ENCODE measurements at regions of chr3 and their contacts with region 1.

Region 1: DNA sequence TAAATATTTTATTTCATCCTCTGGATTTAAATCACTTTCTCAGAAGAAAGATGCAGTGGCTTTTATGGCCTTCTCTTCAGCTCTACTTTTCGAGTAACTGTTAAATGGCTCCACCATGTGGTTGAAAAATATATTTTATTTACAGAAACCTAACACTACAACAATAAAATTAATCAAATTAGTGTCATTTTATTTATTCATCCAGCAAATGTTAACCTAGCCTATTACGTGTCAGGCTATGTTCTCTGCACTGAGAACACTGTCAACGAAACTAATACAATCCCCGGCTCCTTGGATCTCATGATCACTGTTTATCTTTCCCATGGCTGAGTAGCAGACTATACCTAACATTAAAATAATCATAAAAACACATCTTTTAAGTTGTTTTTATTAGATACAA is 148.0 kb upstream of the OSTN start:
- DNase-seq: no peak
- H3K4me3 ChIP-seq: no peak overlapping the region
- H3K27ac ChIP-seq: no peak overlapping the region
- H3K27me3 ChIP-seq: no peaks in the 10 kb centered on the region
- CTCF ChIP-seq: peak; percentile 57

Region 2: DNA sequence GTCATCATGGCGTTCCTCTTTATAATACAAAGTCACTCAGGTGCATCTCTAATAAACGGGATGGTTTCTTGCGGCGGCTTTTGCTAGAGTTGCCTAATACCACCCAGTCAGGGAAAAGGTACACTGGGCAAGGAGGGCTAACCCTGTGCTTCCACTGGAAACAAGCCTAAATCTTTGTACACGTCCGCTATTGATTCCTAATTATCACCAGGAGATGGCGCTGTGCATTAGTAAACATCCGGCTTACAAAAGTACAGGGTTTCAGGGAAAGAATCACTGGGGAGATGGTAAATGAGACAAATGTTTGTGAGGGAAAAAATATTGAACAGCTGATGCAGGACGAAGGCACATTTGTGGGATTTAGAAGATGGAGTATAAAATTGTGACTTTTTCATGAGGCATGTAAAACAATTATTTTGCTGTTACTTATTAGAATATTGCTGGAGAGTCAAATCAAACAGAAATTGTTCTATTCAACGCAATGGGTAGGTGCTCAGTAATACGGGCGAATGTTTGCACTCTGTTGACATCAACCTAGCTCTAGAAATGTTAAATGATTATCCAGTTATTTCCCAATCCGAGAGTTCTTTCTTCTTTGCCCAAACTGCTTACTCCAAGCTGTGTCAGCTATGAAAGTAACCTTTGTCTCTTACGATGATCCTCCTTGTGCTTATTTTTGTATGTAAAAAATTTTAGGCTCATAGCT is 239.1 kb before region 1 on chr3:
- CTCF ChIA-PET with region 1: interaction called, 44 read pairs
- POLR2A ChIA-PET with region 1: no interaction called
- DNase-seq: peak; percentile 36
- H3K4me3 ChIP-seq: peak overlapping the region; percentile 52
- H3K27ac ChIP-seq: no peak overlapping the region
- H3K27me3 ChIP-seq: no peaks in the 10 kb centered on the region
- CTCF ChIP-seq: peak; percentile 82

Region 3: GRCh38 chr3:190826018-190826417 is 225.0 kb before region 1 on chr3:
- CTCF ChIA-PET with region 1: no interaction called
- POLR2A ChIA-PET with region 1: no interaction called
- DNase-seq: no peak
- H3K4me3 ChIP-seq: no peak overlapping the region
- H3K27ac ChIP-seq: no peak overlapping the region
- H3K27me3 ChIP-seq: no peaks in the 10 kb centered on the region
- CTCF ChIP-seq: no peak

Region 4: GRCh38 chr3:191066669-191067068 is 15.6 kb after region 1 on chr3:
- CTCF ChIA-PET with region 1: interaction called, 25 read pairs
- POLR2A ChIA-PET with region 1: no interaction called
- DNase-seq: no peak
- H3K4me3 ChIP-seq: no peak overlapping the region
- H3K27ac ChIP-seq: no peak overlapping the region
- H3K27me3 ChIP-seq: no peaks in the 10 kb centered on the region
- CTCF ChIP-seq: no peak